ENCODE measurements at regions of chr11 and their contacts with region 1.

Region 1: DNA sequence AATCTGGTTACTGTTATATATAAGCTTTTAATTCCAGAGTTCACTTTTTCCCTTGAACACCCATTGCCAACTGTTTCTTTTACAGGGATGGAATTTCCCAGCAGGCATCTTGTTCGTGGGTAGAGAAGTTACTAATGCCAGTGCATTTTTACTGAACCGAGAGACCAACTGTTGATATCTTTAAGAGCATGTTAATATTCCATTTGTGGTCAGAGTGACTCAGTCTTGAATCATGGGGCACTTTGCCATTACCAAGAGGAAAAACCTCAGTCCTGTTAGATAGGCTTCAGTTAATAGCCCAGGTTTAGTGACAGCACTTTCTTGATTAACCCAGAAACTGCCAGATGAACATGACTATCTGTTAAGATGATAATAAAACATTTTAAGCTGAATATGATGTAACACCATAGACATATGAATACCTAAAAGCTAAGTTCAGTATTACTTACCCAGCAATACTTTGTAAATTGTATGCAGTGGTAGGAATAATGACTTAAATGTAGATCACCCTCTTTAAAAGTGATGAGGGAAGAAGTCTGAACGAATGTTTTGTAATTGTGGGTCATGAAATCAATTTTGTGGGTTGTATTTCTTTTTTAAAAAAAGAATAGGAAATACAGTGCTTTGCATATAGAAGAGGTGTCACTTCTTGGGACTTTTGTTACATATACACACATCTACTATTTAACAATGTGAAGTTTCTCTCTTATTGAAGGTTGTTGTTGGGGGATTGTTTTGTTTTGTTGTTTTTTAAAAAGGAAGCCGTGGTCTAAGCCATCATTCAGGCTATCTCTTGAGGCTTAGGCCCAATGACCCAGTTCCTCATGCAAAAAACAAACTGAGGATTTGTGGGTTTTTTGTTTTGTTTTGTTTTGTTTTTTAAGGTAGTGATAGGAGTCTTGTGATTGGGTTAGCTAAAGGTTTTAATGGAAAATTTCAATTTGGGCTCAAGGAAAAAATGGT is 79.2 kb upstream of the GRIK4 start:
- DNase-seq: no peak
- H3K4me3 ChIP-seq: no peak overlapping the region
- H3K27ac ChIP-seq: peak overlapping the region; percentile 56 to 73 (median 64)
- H3K4me1 ChIP-seq: peaks cover 0 to 12% (median 6%) of the 10 kb centered on the region in 4 donors
- H3K27me3 ChIP-seq: no peaks in the 10 kb centered on the region
- CTCF ChIP-seq: no peak
- EP300 ChIP-seq: no peak
- POLR2A ChIP-seq: no peak

Region 2: DNA sequence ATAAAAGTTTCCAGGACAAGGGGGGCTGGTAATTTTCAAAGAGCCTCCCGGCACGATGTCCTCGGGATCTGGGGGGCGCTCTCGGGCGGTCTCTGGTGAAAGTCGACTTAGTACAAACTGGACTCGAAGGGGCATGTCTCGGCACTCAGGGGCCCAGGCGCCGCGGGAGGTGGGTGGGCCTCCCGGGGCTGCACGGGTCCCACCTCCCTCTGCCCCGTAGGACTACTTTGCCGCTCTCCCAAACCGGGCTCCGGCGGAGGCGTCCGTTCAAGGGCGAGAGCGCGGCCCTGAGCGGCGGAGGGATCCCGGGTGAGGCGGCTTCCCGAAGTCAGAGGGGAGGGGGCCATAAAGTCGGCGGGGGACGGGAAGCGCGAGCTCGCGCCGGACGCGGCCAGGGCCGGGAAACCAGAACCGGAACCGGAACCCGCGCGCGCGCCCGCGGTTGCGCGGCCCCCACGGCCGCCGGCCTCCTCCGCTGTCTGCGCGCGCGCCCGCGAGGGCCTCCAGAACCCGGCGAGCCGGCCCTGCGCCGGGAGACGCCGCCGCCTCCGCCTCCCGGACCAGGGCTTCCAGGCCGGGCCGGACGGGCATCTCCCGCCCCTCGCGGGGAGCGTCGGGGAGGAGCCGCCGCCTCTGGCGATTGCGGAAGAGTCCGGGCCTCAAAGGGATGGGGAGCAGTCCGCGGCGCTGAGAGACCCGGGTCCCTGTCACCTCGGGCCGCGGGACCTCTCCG is 96.3 kb before region 1 on chr11 and contains the start of gene ARHGEF12:
- in situ Hi-C with region 1: loop called in 1 of 4 experiments (anchors 25 kb)
- intact Hi-C with region 1: loop called (anchors 2 kb)
- DNase-seq: peak; percentile 96
- H3K4me3 ChIP-seq: peak within 1 kb of the TSS; percentile 72 to 99 (median 82)
- H3K27ac ChIP-seq: peak within 1 kb of the TSS; percentile 94 to 100 (median 98)
- H3K4me1 ChIP-seq: peaks cover 7 to 46% (median 36%) of the 10 kb centered on the region in 4 donors
- H3K27me3 ChIP-seq: no peaks in the 10 kb centered on the region
- CTCF ChIP-seq: peak in 4 of 5 experiments; percentile 1 to 30 (median 18)
- EP300 ChIP-seq: no peak
- POLR2A ChIP-seq: peak; percentile 79
- total RNA-seq, gene ARHGEF12: 75.9 to 116 (median 94.3) TPM

Region 3: GRCh38 chr11:120391292-120391691 is 41.0 kb before region 1 on chr11:
- in situ Hi-C with region 1: no loop called
- intact Hi-C with region 1: no loop called
- DNase-seq: no peak
- H3K4me3 ChIP-seq: no peak overlapping the region
- H3K27ac ChIP-seq: peak overlapping the region in 1 of 4 donors; percentile 34
- H3K4me1 ChIP-seq: peaks cover 5 to 50% (median 30%) of the 10 kb centered on the region in 4 donors
- H3K27me3 ChIP-seq: no peaks in the 10 kb centered on the region
- CTCF ChIP-seq: no peak
- EP300 ChIP-seq: no peak
- POLR2A ChIP-seq: no peak